Activated CD8-positive, alpha-beta T cell treated with anti-CD3 and anti-CD28 coated beads for 36 hours (primary cell): ENCODE measurements at regions of chr1 and their contacts with region 1.

Region 1: DNA sequence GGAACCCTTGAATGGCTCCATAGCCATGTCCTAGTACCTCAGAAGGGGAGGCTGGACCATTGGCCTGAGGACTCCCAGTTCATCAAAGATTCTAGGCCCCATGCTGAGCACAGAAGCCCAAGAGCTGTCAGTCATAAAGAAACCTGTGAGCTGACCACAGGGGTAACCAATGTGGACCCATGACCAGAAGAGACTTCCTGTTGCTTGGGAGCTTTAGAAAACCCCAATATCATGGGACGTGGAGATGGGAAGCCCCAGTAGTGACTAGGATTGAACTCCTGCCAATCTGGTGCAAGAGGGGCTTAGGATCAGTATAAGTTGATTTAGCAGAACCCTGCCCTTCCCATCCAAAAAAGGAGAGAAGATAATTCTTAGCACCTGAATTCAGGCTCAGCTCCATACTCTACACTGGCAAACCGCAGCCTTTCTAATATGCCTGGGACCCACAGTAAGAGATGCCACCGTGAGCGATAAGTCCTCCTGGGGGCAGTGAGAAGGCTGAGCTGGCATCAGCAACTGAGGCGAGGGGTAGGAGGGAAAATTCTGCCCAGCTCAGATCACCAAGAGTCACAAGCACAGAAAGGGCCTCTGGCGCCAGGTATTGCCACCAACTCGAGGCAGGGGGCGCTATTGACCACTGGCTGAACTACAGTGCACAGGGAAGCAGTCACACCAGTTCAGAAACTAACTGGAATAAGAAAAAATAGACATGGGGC is 108.9 kb downstream of the CAPN8 start:
- DNase-seq: peak; percentile 75
- ATAC-seq: peak; percentile 76
- H3K4me3 Mint-ChIP-seq: no peak overlapping the region
- H3K27ac Mint-ChIP-seq: no peak overlapping the region
- H3K4me1 Mint-ChIP-seq: no peaks in the 10 kb centered on the region
- H3K27me3 Mint-ChIP-seq: no peaks in the 10 kb centered on the region
- CTCF ChIP-seq: peak; percentile 57

Region 2: DNA sequence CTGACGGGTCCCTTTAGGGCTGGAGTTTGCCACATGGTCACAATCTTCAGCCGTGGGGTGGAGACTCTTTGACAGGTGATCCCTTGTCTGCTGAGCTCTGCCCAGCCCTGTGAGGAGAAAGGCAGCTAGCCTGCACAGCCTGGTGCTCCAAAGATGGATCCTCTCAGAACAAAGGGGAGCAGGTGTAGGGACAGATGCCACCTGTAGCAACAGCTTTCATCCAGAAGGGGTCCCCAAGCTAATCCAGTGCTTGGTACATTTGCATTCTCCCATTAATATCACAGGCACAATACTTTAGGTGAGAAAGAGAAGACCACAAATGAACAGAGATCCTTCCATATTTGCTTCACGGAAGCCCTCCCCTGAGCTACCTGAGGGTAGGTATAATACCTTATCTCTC is 70.2 kb before region 1 on chr1:
- CTCF ChIA-PET with region 1: no interaction called
- POLR2A ChIA-PET with region 1: no interaction called
- intact Hi-C with region 1: no loop called
- DNase-seq: no peak
- ATAC-seq: no peak
- H3K4me3 Mint-ChIP-seq: no peak overlapping the region
- H3K27ac Mint-ChIP-seq: no peak overlapping the region
- H3K4me1 Mint-ChIP-seq: no peaks in the 10 kb centered on the region
- H3K27me3 Mint-ChIP-seq: no peaks in the 10 kb centered on the region
- CTCF ChIP-seq: no peak

Region 3: DNA sequence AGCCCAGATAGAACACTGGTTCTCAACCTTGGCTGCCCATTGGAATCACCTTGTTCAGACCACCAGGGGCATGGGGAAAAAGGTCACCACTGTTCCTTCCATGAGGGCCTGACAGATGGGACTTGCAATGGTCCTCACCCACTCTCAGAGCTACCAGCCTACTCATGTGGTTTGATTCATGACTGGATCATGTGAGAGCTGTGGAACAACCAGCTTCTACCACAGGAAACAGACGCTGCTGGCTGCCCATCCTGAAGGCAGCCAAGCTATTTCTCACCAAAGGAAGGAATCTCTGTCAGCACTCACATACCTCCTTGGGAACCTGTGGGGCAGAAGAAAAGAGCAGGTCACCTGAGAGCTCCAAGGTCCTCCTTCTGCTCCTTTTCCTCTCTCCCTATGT is 55.4 kb after region 1 on chr1:
- CTCF ChIA-PET with region 1: interaction called, 25 read pairs
- POLR2A ChIA-PET with region 1: no interaction called
- intact Hi-C with region 1: no loop called
- DNase-seq: no peak
- ATAC-seq: no peak
- H3K4me3 Mint-ChIP-seq: no peak overlapping the region
- H3K27ac Mint-ChIP-seq: no peak overlapping the region
- H3K4me1 Mint-ChIP-seq: no peaks in the 10 kb centered on the region
- H3K27me3 Mint-ChIP-seq: no peaks in the 10 kb centered on the region
- CTCF ChIP-seq: no peak

Region 4: DNA sequence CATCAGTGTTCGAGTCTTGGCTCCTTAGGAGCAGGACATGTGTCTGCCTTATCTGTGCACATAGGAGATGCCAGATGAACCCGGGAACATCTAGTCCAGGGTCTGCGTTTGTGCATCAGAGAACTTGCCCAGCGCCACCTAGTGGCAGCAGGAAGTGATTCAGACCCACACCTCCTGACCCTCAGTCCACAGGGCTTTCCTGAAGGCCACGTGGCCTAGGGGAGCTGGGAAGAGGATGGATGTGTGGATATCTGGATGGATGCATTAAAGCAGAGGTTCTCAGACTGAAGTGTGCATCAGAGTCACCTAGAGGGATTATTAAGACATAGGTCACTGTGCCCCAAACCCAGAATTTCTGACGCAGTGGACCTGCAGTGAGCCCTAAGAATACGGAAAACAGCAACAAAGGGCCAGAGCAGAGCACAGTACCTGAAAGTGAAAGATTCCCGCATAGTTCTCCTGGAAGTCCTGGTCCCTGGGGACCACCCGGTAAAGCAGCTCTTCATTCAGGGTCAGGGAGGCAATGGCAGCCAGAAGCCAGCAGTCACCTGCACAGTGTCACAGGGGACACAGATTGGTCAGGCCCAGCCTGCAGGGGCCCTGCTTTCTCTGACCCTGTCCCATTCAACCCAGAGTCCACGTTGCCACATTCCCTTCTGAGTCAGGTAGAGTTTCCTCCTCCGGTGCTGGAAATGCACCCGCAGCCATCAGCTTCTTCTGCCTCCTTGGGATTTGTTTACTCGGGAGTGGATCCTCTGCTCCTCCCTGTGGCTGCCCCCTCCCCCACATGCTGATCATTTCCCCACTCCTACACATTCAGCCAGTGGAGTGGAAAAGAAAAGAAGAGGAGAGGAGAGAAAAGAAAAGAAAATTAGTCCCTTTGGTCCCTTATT is 71.9 kb after region 1 on chr1:
- CTCF ChIA-PET with region 1: interaction called, 12 read pairs
- POLR2A ChIA-PET with region 1: no interaction called
- intact Hi-C with region 1: no loop called
- DNase-seq: peak; percentile 65
- ATAC-seq: peak; percentile 74
- H3K4me3 Mint-ChIP-seq: no peak overlapping the region
- H3K27ac Mint-ChIP-seq: no peak overlapping the region
- H3K4me1 Mint-ChIP-seq: no peaks in the 10 kb centered on the region
- H3K27me3 Mint-ChIP-seq: peaks cover 4% of the 10 kb centered on the region
- CTCF ChIP-seq: peak; percentile 86

Region 5: DNA sequence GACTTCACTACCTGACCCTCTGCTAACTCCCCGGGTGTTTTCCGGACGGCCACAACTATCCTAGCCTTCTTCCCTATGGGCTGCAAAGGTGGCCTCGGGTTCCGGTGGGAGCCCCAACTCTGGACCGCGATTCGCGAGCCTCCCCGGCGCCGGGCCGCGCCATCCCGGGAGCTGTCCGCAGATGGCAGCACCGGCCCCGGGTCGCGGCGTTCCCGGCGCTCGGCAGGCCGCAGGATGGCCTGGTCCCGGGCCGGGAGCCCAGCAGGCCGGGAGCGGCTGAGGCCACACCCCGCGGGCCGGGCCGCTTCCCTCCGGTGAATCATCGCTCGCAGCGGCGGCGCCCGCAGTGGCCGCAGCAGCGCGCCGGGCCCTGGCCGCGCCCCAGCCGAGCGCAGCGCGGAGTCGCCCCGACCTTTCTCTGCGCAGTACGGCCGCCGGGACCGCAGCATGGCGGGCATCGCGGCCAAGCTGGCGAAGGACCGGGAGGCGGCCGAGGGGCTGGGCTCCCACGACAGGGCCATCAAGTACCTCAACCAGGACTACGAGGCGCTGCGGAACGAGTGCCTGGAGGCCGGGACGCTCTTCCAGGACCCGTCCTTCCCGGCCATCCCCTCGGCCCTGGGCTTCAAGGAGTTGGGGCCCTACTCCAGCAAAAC is 155.8 kb after region 1 on chr1 and contains the start of gene CAPN2:
- CTCF ChIA-PET with region 1: no interaction called
- POLR2A ChIA-PET with region 1: no interaction called
- intact Hi-C with region 1: no loop called
- DNase-seq: peak; percentile 54
- ATAC-seq: peak; percentile 54
- H3K4me3 Mint-ChIP-seq: peak within 1 kb of the TSS; percentile 86
- H3K27ac Mint-ChIP-seq: peak within 1 kb of the TSS; percentile 81
- H3K4me1 Mint-ChIP-seq: peaks cover 51% of the 10 kb centered on the region
- H3K27me3 Mint-ChIP-seq: no peaks in the 10 kb centered on the region
- CTCF ChIP-seq: peak; percentile 51
- total RNA-seq, gene CAPN2: 31.5 to 33.6 TPM

Region 6: DNA sequence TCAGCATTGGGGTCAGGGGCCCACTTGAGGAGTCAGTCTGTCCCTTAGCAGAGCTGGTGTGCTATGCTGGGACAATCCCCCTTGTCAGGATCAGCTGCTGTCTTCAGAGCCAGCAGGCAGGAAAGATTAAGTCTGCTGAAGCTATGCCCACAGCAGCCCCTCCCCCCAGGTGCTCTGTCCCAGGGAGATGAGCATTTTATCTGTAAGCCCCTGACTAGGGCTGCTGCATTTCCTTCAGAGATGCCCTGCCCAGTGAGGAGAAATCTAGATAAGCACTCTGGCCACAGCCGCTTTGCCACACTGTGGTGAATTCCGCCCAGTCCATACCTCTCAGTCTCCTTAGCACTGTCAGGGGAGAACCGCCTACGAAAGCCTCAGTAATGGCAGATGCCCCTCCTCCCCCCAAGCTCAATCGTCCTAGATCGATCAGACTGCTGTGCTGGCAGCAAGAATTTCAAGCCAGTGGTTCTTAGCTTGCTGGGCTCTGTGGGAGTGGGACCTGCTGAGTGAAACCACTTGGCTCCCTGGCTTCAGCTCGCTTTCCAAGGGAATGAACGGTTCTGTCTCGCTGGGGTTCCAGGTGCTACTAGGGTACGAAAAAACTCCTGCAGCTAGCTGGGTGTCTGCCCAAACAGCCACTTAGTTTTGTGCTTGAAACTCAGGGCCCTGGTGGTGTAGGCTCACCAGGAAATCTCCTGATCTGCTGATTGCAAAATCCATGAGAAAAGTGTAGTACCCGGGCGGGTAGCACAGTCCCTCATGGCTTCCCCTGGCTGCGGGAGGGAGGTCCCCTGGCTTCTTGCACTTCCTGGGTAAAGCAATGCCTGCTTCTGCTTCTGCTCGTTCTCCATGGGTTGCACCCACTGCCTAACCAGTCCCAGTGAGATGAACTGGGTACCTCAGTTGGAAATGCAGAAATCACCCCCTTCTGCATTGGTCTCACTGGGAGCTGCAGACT is 314.3 kb after region 1 on chr1:
- CTCF ChIA-PET with region 1: no interaction called
- POLR2A ChIA-PET with region 1: no interaction called
- intact Hi-C with region 1: no loop called
- DNase-seq: no peak
- ATAC-seq: no peak
- H3K4me3 Mint-ChIP-seq: no peak overlapping the region
- H3K27ac Mint-ChIP-seq: no peak overlapping the region
- H3K4me1 Mint-ChIP-seq: no peaks in the 10 kb centered on the region
- H3K27me3 Mint-ChIP-seq: peaks cover 24% of the 10 kb centered on the region
- CTCF ChIP-seq: no peak